ENCODE measurements at regions of chr9 and their contacts with region 1.

Region 1: GRCh38 chr9:83937911-83938323 is 16.7 kb upstream of the KIF27 start:
- DNase-seq: peak; percentile 28
- H3K4me3 Mint-ChIP-seq: no peak overlapping the region
- H3K27ac Mint-ChIP-seq: no peak overlapping the region
- H3K4me1 Mint-ChIP-seq: peaks cover 19% of the 10 kb centered on the region
- H3K27me3 Mint-ChIP-seq: no peaks in the 10 kb centered on the region
- CTCF ChIP-seq: no peak

Region 2: DNA sequence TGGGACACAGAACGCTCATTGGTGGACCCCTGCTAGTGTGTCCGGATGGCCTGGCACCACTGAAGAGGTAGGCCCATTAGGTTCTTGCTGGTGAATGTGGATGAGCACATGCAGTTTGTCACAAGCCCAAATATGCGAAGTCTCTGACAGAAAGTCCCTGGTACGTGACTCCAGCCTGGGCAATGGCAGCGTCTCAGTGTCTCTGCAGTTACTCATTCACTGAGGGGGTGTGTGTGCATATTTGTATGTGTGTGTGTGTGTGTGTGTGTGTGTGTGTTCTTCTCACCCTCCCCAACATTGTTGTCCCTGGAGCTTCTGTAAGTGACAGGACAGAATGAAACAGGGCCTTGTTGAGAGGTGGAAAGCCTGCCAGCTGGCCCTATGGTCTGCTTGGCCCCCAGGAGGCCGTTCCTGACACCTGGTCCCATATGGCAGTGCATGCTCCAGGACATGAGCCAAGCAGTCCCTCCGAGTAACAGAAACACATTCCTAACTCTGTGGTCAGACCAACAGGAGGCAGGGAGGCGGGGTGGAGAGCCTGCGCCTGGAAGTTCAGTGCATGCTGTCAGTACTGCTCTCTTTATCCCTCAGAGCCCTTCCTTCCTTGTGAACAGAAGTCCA is 232.7 kb after region 1 on chr9:
- CTCF ChIA-PET with region 1: no interaction called
- intact Hi-C with region 1: loop called (anchors 1 kb)
- DNase-seq: peak; percentile 14
- H3K4me3 Mint-ChIP-seq: no peak overlapping the region
- H3K27ac Mint-ChIP-seq: no peak overlapping the region
- H3K4me1 Mint-ChIP-seq: no peaks in the 10 kb centered on the region
- H3K27me3 Mint-ChIP-seq: peaks cover 12% of the 10 kb centered on the region
- CTCF ChIP-seq: no peak

Region 3: GRCh38 chr9:84261082-84261746 is 323.3 kb after region 1 on chr9:
- CTCF ChIA-PET with region 1: interaction called, 8 read pairs
- intact Hi-C with region 1: loop called (anchors 1 kb)
- DNase-seq: peak; percentile 80
- H3K4me3 Mint-ChIP-seq: no peak overlapping the region
- H3K27ac Mint-ChIP-seq: no peak overlapping the region
- H3K4me1 Mint-ChIP-seq: no peaks in the 10 kb centered on the region
- H3K27me3 Mint-ChIP-seq: no peaks in the 10 kb centered on the region
- CTCF ChIP-seq: peak; percentile 62